Activated T-helper 1 cell treated with anti-CD3 and anti-CD28 coated beads, Interleukin-12 subunit alpha, Interleukin-12 subunit beta, Interleukin-2, Interleukin-4 antibody, amounts not matched to agents 30 ng/mL and 10 ng/mL and 1 ng/mL, durations not matched to agents 14 hours and 24 hours and 36 hours (primary cell): ENCODE measurements at regions of chr14 and their contacts with region 1.

Region 1: GRCh38 chr14:77376771-77377501 is at the starts of genes SAMD15 and TMED8:
- DNase-seq: peak; percentile 80
- H3K4me3 Mint-ChIP-seq: peak within 1 kb of the TSS; percentile 92
- H3K27ac Mint-ChIP-seq: peak within 1 kb of the TSS; percentile 89
- H3K4me1 Mint-ChIP-seq: peaks cover 37% of the 10 kb centered on the region
- H3K27me3 Mint-ChIP-seq: peaks cover 10% of the 10 kb centered on the region
- total RNA-seq, gene SAMD15: 0.29 and 1.1 TPM in 2 replicates
- total RNA-seq, gene TMED8: 28.1 and 28.4 TPM in 2 replicates

Region 2: DNA sequence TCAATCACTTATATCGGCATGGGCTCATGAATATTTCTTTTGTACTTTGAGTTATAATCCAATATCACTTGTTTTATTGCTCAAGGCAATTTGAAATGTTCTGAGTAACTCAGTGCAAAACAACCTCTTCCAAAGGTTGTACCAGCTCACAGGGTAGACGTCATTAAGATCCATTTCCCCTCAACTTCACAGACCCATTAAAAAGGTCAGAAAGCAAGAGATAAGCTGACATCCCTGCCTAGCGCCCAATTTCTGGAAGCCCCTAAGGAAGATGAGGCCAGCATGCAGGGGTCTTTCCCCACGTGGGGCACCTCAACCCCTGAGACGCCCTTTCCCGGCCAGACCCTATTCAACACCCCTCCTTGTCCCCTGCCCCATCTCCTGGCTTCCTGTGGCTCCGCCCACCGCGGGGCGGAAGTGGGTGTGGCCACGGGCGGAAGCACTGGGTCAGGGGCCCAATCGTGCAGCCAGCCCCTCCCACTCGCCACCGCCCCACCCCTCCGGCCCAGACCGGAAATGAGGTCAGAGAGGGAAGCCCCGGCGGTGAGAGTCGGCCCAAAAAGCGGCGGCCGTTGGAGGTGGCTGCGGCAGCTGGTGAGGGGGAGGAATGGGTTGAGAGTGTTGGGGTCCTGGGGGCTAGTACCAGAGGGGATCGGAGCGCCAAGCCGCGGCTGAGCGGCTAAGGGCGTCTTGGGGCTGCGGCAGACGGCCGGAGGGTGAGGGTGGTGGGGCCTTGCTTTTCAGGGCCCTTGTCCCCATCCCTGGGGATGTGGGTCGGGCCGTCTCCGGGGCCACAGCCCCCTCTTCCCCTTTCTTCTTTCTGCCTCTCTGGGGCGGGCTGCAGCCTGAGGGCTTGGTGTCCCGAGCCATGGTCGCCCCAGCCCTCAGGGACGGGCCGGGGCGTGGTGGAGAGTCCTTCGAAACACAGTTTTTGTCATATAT is 1225.3 kb before region 1 on chr14 and contains the start of gene GPATCH2L:
- intact Hi-C with region 1: loop called (anchors 5 kb)
- DNase-seq: peak; percentile 95
- H3K4me3 Mint-ChIP-seq: peak within 1 kb of the TSS; percentile 94
- H3K27ac Mint-ChIP-seq: peak within 1 kb of the TSS; percentile 94
- H3K4me1 Mint-ChIP-seq: peaks cover 54% of the 10 kb centered on the region
- H3K27me3 Mint-ChIP-seq: peaks cover 11% of the 10 kb centered on the region
- total RNA-seq, gene GPATCH2L: 56.1 and 60.9 TPM in 2 replicates

Region 3: GRCh38 chr14:77033622-77034521 is 343.1 kb before region 1 on chr14:
- intact Hi-C with region 1: loop called (anchors 10 kb)
- DNase-seq: peak; percentile 80
- H3K4me3 Mint-ChIP-seq: peak overlapping the region; percentile 87
- H3K27ac Mint-ChIP-seq: peak overlapping the region; percentile 98
- H3K4me1 Mint-ChIP-seq: peaks cover 79% of the 10 kb centered on the region
- H3K27me3 Mint-ChIP-seq: no peaks in the 10 kb centered on the region

Region 4: DNA sequence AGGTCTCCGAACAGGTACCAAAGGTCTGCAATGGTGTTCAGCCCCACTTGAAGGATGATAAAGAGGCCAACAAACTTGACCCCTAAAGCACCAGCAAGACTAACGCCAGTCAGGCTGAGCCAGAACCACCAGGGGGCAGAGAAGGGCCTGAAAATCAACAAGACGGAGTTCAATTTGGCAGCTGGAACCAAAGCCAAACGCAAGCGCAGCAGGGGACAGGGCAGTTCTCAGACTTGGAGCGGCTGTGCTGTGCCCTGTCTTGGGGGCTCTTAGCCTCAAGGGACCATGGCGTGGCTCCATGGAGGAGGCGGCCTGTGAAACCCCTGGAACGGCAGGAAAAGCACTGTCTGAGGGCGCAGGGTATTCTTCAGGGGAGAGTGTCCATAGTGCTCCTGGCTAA is 75.8 kb before region 1 on chr14:
- intact Hi-C with region 1: loop called (anchors 1 kb)
- DNase-seq: peak; percentile 16
- H3K4me3 Mint-ChIP-seq: no peak overlapping the region
- H3K27ac Mint-ChIP-seq: no peak overlapping the region
- H3K4me1 Mint-ChIP-seq: peaks cover 24% of the 10 kb centered on the region
- H3K27me3 Mint-ChIP-seq: no peaks in the 10 kb centered on the region

Region 5: GRCh38 chr14:77353469-77354141 is 23.3 kb before region 1 on chr14:
- intact Hi-C with region 1: no loop called
- DNase-seq: no peak
- H3K4me3 Mint-ChIP-seq: no peak overlapping the region
- H3K27ac Mint-ChIP-seq: no peak overlapping the region
- H3K4me1 Mint-ChIP-seq: peaks cover 4% of the 10 kb centered on the region
- H3K27me3 Mint-ChIP-seq: no peaks in the 10 kb centered on the region

Region 6: DNA sequence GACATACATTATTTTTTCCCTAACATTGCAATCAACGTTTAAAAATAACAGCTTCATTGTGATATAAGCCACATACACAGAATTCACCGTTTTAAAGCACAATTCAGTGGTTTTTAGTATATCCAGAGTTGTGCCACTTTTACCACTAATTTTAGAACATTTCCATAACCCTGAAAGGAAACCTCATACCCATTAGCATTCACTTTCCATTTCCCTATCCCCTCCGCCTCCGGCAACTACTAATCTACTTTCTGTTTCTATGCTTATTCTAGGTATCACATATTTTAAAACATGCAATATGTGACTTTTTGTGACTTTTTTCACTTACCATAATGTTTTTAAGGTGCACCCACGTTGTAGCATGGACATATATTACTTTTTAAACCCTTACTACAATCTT is 177.3 kb after region 1 on chr14:
- intact Hi-C with region 1: loop called (anchors 5 kb)
- DNase-seq: no peak
- H3K4me3 Mint-ChIP-seq: peak overlapping the region; percentile 45
- H3K27ac Mint-ChIP-seq: peak overlapping the region; percentile 47
- H3K4me1 Mint-ChIP-seq: peaks cover 17% of the 10 kb centered on the region
- H3K27me3 Mint-ChIP-seq: no peaks in the 10 kb centered on the region

Region 7: DNA sequence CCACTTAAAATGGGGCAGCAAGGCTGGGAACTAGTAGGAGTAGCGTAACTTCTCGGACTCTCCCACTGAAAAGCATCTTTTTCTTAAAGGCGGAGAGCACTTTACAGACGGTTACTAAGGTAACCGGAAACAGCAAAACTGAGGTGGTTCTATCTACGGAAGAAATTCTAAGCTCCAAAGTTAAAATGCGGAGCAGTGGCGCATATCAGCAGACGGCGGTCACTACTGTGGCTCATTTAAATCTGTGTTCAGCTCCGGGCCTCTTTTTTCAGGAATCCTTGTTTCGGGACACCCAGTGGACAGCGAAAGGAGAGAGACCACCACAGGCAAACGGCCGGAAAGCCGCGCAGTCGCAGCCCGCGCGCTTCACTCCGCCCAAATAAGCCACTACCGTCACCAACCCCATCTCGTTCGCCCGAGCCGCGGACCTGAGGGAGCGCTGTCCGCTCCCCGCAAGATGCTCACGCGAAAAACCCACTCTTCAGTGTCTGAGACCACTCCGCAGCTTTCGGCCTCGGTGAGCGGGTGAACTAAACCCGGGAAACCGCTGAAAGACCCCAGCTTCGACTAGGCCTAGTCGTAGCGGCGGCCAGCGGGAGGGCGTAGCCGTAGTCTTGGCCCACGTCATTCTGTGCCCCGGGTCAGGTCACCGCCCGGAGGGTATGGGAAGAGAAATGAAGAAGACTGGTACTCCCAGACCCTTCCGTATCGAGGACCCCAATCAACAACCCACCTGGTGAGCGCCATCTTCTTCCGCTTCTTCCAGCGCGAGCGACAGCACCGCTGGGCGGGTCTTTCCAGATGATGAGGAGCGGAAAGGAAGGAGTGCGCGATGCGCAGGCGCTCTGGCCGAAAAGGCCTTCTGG is 383.7 kb after region 1 on chr14 and contains the start of gene SNW1:
- intact Hi-C with region 1: loop called (anchors 1 kb)
- DNase-seq: peak; percentile 91
- H3K4me3 Mint-ChIP-seq: peak within 1 kb of the TSS; percentile 96
- H3K27ac Mint-ChIP-seq: peak within 1 kb of the TSS; percentile 97
- H3K4me1 Mint-ChIP-seq: peaks cover 38% of the 10 kb centered on the region
- H3K27me3 Mint-ChIP-seq: peaks cover 6% of the 10 kb centered on the region
- total RNA-seq, gene SNW1: 112 and 118 TPM in 2 replicates